Activated T-helper 1 cell treated with anti-CD3 and anti-CD28 coated beads, Interleukin-12 subunit alpha, Interleukin-12 subunit beta, Interleukin-2, Interleukin-4 antibody, amounts not matched to agents 30 ng/mL and 10 ng/mL and 1 ng/mL, durations not matched to agents 14 hours and 24 hours and 36 hours (primary cell): ENCODE measurements at regions of chr22 and their contacts with region 1.

Region 1: DNA sequence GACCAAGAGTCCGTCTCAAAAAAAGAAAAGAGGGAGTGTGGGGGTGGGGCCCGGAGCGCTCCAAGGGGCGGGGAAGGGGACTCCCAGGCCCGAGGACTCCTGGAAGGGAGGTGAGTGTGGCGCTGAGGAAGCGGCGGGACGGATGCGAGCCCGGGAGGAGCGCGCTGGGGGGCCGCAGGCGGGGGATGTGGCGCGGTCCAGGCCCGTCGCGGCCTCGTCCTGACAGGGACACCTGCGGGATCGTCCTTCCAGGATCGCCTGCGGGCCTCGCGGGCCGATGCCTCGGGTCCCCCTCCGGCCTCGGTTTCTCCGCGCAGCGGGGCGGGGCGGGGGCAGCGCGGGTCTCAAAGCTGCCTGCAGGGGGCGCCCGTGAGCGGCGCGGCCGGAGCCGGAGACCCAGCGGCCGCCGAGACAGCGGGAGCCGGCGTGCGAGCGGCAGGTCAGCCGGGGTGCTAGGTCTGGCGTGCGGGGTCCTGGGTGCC is 3.8 kb upstream of the ADORA2A start:
- DNase-seq: peak; percentile 64
- H3K4me3 Mint-ChIP-seq: peak overlapping the region; percentile 80
- H3K27ac Mint-ChIP-seq: no peak overlapping the region
- H3K4me1 Mint-ChIP-seq: peaks cover 31% of the 10 kb centered on the region
- H3K27me3 Mint-ChIP-seq: peaks cover 5% of the 10 kb centered on the region

Region 2: GRCh38 chr22:24189249-24190158 is 234.1 kb before region 1 on chr22:
- intact Hi-C with region 1: loop called (anchors 10 kb)
- DNase-seq: peak; percentile 53
- H3K4me3 Mint-ChIP-seq: no peak overlapping the region
- H3K27ac Mint-ChIP-seq: peak overlapping the region; percentile 28
- H3K4me1 Mint-ChIP-seq: peaks cover 8% of the 10 kb centered on the region
- H3K27me3 Mint-ChIP-seq: no peaks in the 10 kb centered on the region

Region 3: GRCh38 chr22:24325105-24325757 is 98.3 kb before region 1 on chr22:
- intact Hi-C with region 1: loop called (anchors 1 kb)
- DNase-seq: peak; percentile 22
- H3K4me3 Mint-ChIP-seq: no peak overlapping the region
- H3K27ac Mint-ChIP-seq: peak overlapping the region; percentile 1
- H3K4me1 Mint-ChIP-seq: peaks cover 45% of the 10 kb centered on the region
- H3K27me3 Mint-ChIP-seq: no peaks in the 10 kb centered on the region

Region 4: GRCh38 chr22:24486501-24486921 is 63.0 kb after region 1 on chr22:
- intact Hi-C with region 1: loop called (anchors 1 kb)
- DNase-seq: peak; percentile 17
- H3K4me3 Mint-ChIP-seq: no peak overlapping the region
- H3K27ac Mint-ChIP-seq: peak overlapping the region; percentile 63
- H3K4me1 Mint-ChIP-seq: peaks cover 21% of the 10 kb centered on the region
- H3K27me3 Mint-ChIP-seq: peaks cover 9% of the 10 kb centered on the region

Region 5: DNA sequence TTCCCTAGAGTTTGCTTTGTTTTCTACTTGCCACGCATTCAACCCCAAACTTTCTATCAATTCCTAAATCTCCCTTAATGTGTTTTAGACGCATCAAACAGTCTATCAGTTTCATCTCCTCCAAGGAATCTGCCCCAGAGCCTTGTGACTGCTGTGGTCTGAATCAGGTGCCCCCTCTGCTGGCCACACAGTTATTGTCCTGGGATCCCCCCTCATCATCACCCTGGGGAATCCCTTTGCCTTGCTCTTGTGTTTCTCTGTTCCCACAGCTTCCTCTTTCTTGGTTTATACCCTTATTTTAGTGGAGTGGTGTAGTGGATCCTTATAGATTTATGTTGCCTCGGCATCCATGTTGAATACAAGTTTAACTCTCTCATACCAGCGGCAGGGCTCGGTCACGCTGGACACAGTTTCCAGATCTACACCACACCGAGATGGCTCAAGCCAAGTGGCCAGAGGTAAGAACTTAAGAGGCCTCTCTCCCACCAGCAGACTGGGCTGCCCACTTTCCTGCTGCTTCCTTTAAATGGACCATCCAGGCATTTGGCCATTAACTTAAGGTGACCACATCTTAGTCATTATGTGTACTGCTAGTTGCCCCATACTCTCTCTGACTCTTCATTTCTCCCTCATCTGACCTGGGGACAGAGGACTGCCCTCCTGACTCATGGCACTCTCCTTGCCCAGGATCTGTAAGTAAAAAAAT is 79.7 kb after region 1 on chr22:
- intact Hi-C with region 1: loop called (anchors 1 kb)
- DNase-seq: no peak
- H3K4me3 Mint-ChIP-seq: no peak overlapping the region
- H3K27ac Mint-ChIP-seq: no peak overlapping the region
- H3K4me1 Mint-ChIP-seq: peaks cover 31% of the 10 kb centered on the region
- H3K27me3 Mint-ChIP-seq: peaks cover 8% of the 10 kb centered on the region